Aorta (tissue), 5 donors: ENCODE measurements at regions of chr1 and their contacts with region 1.

Region 1: DNA sequence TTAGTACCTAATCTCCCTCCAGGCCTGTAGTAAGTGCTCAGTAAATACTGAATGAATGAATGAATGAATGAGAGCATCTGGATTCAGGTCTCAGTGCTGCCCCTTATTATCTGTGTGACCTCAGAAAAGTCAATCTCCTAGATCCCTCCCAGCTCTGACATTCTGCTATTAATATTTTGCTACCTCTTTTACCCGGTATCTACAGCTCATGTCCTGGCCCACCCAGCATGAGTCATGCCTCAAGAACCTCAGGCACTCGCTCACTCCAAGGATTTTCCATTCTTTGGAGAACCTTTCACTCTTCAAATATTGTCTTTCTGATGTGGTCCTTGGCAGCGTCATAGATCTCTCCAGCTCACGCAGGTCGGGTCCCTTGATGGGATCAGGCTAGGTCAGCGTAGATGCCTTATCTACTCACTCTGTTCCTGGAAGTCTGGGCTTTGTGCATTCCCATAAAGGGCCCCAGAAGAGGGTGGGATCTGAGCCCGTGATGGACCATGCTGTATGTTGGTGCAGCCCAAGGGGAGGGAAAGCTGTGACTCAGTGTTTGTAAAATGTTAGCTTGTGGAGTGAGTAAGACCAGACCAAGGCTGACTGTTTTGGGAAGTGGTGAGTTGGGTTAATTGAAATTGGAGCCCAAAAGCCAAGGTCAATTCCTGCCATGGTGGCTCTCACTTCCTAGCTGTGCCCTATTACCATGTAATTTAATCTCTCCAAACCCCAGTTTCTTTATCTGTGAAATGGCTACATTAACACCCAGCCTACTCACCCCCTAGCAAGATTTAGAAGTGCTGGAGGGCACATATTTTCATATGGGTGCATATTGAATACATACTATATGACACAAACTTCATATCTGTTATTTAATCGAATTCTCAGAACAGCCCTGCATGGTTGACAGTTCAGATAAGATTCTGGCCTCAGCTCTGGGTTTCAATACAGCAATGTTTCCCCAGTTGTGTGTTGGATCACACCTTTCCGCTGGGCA is 214.1 kb upstream of the USP24 start:
- DNase-seq: peak; percentile 89
- ATAC-seq: peak; percentile 90
- H3K4me3 ChIP-seq: no peak overlapping the region
- H3K27ac ChIP-seq: peak overlapping the region; percentile 71 to 88
- H3K4me1 ChIP-seq: peaks cover 2 to 7% of the 10 kb centered on the region in 2 donors
- H3K27me3 ChIP-seq: no peaks in the 10 kb centered on the region

Region 2: DNA sequence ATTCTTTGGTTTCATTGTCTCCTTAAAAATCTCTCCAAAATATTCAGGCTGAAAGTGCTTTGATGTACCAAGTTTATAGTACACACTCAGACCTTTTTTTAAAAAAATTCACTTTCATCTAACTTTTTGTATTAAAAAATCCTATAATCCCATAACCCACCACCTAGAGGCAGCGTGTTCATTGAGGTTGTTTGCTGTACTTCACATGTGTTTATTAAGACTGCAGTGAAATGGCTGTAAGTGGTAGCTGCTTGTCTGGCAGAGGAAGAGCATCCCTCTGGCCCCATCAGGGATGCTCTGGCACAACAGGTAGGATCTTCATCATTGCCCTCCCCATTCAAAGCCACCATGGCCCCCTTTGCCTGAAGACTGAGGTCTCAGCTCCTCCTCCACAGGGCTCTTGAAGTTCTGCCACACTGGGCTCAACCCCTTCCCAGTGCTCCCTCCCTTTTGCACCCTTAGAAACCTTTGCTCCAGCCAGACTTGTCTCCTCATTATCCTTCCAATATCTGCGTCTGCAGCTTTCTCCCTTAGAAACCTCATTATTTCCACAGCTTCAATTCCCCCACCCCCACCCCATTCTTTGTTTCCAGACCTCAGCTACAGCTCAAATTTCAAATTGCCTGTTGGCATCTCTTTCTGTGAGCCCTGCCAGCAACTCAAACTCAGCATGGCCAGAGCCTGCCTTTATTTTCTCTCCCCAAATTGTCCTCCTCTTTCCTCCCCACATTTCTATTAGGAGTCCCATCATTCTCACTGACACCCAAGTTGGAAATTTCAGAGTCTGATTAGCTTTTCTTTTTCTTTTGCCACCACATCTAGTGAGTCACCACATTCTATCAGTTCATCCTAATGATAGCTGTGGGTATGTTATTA is 155.5 kb after region 1 on chr1:
- intact Hi-C with region 1: loop called in 1 of 2 experiments (anchors 10 kb)
- DNase-seq: no peak
- ATAC-seq: peak; percentile 51
- H3K4me3 ChIP-seq: no peak overlapping the region
- H3K27ac ChIP-seq: no peak overlapping the region
- H3K4me1 ChIP-seq: peaks cover 0 to 12% of the 10 kb centered on the region in 2 donors
- H3K27me3 ChIP-seq: no peaks in the 10 kb centered on the region